ENCODE measurements at regions of chr20 and their contacts with region 1.

Region 1: DNA sequence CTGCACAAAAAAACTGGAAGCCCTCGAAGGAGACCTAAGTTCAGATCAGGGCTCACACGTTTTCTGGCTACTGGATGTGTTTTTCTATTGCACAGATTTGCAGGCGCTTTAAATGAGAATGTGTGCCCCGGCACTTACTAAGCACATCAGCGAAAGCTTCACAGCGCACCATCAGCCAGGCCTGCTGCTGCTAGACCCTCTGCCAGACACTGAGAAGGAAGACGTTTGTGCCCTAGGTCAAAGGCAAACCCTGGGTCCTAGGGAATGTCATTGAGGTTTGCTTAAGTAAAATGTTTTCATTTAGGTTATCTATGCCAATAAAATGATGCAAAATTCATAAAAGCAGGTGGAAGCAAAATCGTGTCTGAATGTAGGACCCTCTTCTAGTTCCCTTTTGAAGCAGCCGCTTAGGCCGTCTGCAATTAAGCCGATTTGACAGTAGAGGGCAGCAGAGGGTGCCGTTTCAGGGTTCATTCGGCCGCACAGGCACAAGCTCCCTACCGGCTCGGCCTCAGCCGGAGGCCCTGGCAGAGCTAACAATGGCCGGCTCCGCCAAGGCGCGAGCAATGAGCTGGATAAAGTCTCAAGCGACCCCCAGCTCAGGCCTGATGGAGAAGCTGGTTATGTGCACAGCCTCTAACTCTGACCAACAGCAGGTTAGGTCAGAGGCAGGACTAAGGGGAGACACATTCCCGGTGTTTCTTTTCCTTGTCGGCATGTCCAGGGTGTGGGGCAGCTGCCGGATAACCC is 107.2 kb upstream of the FOXA2 start:
- DNase-seq: peak; percentile 73 to 85
- ATAC-seq: peak; percentile 93 to 97 (median 97)
- H3K4me3 ChIP-seq: peak overlapping the region; percentile 45
- H3K27ac ChIP-seq: no peak overlapping the region
- H3K4me1 ChIP-seq: peaks cover 17% of the 10 kb centered on the region
- H3K27me3 ChIP-seq: no peaks in the 10 kb centered on the region
- CTCF ChIP-seq: peak; percentile 93

Region 2: DNA sequence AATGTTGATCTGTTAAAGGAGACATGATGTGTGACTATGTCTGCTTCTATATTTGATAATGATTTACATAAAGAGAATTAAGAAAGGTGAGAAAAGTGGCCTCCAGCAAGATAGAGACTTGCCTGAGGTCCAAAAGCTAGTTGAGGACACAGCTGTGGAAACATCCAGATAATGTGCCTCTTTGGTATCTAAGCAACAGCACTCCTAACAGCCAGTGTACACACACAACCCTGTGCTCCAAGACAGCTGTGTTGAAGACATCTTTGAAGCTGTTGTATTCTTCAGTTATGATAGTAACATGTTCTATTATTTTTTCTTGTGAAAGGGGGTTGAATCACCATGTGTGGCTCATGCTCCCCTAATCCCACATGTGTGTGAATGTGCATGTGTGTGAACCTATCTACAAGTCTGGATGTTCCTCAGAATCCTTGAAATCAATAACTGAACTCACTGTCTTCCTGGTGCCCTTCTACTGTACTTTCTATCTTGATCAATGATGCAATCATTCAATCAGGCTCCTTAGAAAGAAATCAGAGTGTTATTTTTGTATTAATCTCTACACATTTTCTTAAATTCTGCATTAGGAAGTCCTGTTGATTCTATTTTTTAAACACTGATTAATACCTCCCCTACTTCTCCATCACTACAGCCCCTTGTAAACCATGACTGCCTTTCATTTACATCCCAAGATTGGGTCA is 226.9 kb after region 1 on chr20:
- intact Hi-C with region 1: no loop called
- DNase-seq: no peak
- ATAC-seq: no peak
- H3K4me3 ChIP-seq: no peak overlapping the region
- H3K27ac ChIP-seq: no peak overlapping the region
- H3K4me1 ChIP-seq: no peaks in the 10 kb centered on the region
- H3K27me3 ChIP-seq: peaks cover 0 to 5% (median 0%) of the 10 kb centered on the region in 3 donors
- CTCF ChIP-seq: no peak

Region 3: GRCh38 chr20:23200918-23201317 is 509.4 kb after region 1 on chr20:
- intact Hi-C with region 1: loop called in 1 of 2 experiments (anchors 10 kb)
- DNase-seq: peak; percentile 32 to 68
- ATAC-seq: peak; percentile 67 to 91 (median 80)
- H3K4me3 ChIP-seq: no peak overlapping the region
- H3K27ac ChIP-seq: no peak overlapping the region
- H3K4me1 ChIP-seq: peaks cover 10% of the 10 kb centered on the region
- H3K27me3 ChIP-seq: no peaks in the 10 kb centered on the region
- CTCF ChIP-seq: peak; percentile 54

Region 4: DNA sequence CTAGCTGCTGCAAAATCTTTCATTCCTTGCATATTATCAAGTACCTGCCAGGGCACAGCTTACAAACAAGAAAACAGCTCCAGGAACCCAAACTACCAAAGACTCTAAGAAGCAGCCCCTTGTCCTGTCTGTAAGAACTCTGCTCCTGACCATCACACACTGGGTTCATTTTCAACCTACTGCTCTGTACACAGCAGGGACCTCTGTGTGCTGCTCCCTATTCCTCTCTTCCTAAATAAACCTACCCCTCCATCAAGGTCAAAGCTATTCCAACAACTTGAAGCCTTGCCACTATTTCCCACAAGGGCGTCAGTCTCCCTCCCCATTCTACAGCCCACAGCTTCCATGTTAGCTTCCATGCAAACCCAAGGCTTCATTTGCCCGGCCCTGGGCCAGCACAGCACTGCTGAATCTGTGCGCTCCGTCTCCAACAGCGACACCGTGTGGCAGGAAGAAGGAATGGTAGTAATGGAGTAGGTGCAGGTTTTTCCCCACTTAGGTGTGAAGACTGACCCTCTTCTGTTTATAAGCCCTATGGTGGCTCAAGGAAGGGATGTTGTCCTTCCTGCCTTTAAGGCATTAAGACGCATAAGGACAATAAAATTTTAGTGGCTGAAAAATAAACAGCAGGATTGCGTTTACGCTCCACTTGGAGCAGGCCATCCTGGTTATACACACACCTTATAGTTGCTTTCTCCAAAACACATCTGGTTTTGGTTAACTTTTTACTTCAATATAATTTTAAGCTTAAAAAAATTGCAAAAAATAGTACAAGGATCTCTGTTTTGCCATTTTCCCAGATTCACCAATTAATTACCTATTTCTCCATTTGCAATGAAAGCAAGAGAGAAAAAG is 543.9 kb after region 1 on chr20:
- intact Hi-C with region 1: loop called (anchors 5 to 10 kb)
- DNase-seq: peak; percentile 63 to 79
- ATAC-seq: peak; percentile 83 to 94 (median 93)
- H3K4me3 ChIP-seq: no peak overlapping the region
- H3K27ac ChIP-seq: no peak overlapping the region
- H3K4me1 ChIP-seq: no peaks in the 10 kb centered on the region
- H3K27me3 ChIP-seq: no peaks in the 10 kb centered on the region
- CTCF ChIP-seq: peak; percentile 67

Region 5: DNA sequence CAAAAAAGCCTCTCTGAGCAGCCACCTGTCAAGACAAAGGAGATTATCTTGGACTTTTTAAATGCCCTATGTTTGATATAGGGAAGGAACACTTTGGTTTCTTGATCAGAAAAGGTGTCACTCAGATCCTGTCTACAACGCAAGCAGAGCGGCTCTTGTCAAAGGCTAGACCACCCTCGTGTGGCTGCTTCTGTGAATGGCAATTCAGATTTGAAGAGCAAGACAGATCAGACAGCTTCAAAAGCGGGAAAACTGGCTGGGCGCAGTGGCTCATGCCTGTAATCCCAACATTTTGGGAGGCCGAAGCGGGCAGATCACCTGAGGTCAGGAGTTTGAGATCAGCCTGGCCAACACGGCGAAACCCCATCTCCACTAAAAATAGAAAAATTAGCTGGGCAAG is 649.0 kb after region 1 on chr20:
- intact Hi-C with region 1: loop called (anchors 2 kb)
- DNase-seq: peak; percentile 43 to 75
- ATAC-seq: peak; percentile 79 to 97 (median 85)
- H3K4me3 ChIP-seq: no peak overlapping the region
- H3K27ac ChIP-seq: no peak overlapping the region
- H3K4me1 ChIP-seq: no peaks in the 10 kb centered on the region
- H3K27me3 ChIP-seq: no peaks in the 10 kb centered on the region
- CTCF ChIP-seq: peak; percentile 74

Region 6: DNA sequence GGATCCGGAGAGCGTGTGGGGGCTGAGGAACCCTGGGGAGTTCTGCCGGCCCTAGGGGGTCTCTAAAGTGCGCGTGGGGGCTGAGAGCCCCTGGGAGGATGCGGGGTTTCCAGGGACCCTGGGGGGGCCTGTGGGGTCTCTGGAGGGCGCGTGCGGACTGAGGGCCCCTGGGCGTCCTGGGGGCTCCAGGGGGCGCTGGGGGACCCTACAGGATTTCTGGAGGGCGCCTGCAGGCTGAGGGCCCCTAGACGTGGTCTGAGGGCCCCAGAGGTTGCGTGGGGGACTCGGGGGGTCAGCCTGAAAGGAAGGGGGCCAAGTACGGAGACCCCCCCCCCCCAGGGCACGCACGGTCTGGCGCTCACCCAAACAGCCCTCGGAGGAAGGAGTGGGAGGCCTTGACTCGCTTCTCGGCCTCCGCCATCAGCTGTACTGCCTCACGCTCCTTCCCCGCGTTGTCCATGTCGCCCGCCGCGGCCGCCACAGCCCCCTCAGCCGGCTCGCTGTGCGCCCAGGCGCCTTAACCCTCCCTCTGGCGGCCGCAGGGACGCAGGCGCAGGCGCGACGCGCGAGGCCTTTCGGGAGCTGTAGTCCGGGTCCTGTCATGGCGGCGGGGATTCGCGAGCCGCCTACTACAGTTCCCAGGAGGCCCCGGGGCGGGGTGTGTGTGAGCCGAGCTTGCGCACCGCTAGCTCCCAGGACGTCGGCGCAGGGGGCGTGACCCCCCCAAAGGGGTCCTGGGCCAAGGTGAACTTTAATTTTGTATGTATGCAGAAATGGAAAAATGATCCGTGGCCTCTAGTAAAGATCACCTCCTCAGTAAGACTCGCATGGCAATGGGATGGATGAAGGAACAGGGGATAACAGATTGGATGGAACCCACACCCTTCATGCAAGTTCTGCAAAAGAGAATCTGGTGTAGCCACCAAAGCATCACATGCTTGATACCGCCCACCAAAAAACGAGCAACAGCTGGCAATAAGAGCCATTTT is 729.7 kb after region 1 on chr20 and contains the start of gene NAPB:
- intact Hi-C with region 1: loop called in 1 of 2 experiments (anchors 10 kb)
- DNase-seq: peak; percentile 96 to 97
- ATAC-seq: peak; percentile 98 to 100 (median 99)
- H3K4me3 ChIP-seq: peak within 1 kb of the TSS; percentile 92
- H3K27ac ChIP-seq: peak within 1 kb of the TSS; percentile 93
- H3K4me1 ChIP-seq: peaks cover 34% of the 10 kb centered on the region
- H3K27me3 ChIP-seq: no peaks in the 10 kb centered on the region
- CTCF ChIP-seq: peak; percentile 61
- total RNA-seq, gene NAPB: 2.5 to 5.0 (median 3.5) TPM

Measured in psoas muscle (tissue), 8 donors.